GM18951 (cell line): ENCODE measurements at regions of chr20 and their contacts with region 1.

Region 1: GRCh38 chr20:20358801-20359200 is 9.1 kb upstream of the INSM1 start:
- POLR2A ChIP-seq: no peak

Region 2: GRCh38 chr20:19995220-19995863 is 363.5 kb before region 1 on chr20:
- in situ Hi-C with region 1: no loop called
- POLR2A ChIP-seq: no peak

Region 3: DNA sequence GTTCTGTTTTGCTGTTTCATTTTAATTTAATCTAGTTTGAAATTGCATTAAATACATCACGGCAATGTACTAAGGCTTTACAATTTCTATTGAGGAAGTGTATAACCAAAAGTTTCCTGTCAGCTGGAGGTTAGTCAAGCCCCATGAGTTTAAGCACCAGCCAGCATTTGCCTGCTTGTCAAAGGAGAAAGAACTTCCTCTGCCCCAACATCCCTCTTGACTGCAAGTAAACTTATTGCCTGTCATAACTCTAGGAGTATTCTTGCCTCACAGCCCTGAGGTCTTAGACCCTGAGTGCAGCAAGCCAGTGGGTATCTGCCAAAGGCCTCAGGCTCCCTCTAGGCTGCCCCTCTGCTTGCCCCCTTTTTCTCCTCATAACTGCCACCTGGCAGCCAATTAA is 97.6 kb before region 1 on chr20:
- in situ Hi-C with region 1: no loop called
- POLR2A ChIP-seq: no peak

Region 4: GRCh38 chr20:20292472-20292871 is 66.3 kb before region 1 on chr20:
- in situ Hi-C with region 1: no loop called
- POLR2A ChIP-seq: no peak

Region 5: GRCh38 chr20:20549718-20550117 is 190.9 kb after region 1 on chr20:
- in situ Hi-C with region 1: loop called (anchors 10 kb)
- POLR2A ChIP-seq: no peak